ENCODE measurements at regions of chr3 and their contacts with region 1.

Region 1: DNA sequence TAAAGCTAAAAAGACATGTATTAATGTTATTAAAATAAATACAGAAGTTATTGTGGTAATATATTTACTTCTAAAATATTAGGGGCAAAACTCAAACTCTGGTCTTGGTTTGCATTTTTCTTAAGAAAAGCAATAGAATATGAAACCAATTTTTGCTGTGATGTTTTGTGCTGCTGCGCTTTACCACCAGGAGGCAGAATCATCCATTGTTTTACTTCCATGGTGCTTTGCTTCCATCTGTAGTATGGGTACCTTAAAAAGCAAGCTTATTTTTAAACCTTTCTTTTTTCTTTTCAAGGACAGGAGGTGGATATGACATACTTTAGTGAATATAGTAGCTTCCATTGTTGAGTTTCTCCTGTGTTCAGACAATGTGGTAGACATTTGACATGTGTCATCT is 46.6 kb upstream of the MRPL3 start:
- DNase-seq: no peak
- ATAC-seq: peak; percentile 20; the same call in 1 of the 3 replicates
- H3K4me3 ChIP-seq: no peak overlapping the region
- H3K27ac ChIP-seq: no peak overlapping the region
- H3K4me1 ChIP-seq: peaks cover 14% of the 10 kb centered on the region
- H3K27me3 ChIP-seq: no peaks in the 10 kb centered on the region
- CTCF ChIP-seq: peak; percentile 70 to 76 (median 73)
- EP300 ChIP-seq: no peak
- POLR2A ChIP-seq: no peak
- RAD21 ChIP-seq: peak; percentile 78

Region 2: GRCh38 chr3:131033480-131034080 is 515.8 kb before region 1 on chr3:
- CTCF ChIA-PET with region 1: interaction called, 11 read pairs
- POLR2A ChIA-PET with region 1: no interaction called
- RAD21 ChIA-PET with region 1: interaction called, 7 read pairs
- SMC1A ChIA-PET with region 1: interaction called, 4 read pairs
- in situ Hi-C with region 1: no loop called
- intact Hi-C with region 1: loop called (anchors 10 kb)
- DNase-seq: no peak
- ATAC-seq: peak; percentile 82
- H3K4me3 ChIP-seq: no peak overlapping the region
- H3K27ac ChIP-seq: no peak overlapping the region
- H3K4me1 ChIP-seq: no peaks in the 10 kb centered on the region
- H3K27me3 ChIP-seq: no peaks in the 10 kb centered on the region
- CTCF ChIP-seq: peak; percentile 48 to 67 (median 57); a peak in 5 of 6 replicates
- EP300 ChIP-seq: no peak
- POLR2A ChIP-seq: no peak
- RAD21 ChIP-seq: peak; percentile 71

Region 3: GRCh38 chr3:131561511-131561910 is 12.2 kb after region 1 on chr3:
- CTCF ChIA-PET with region 1: interaction called, 29 read pairs
- POLR2A ChIA-PET with region 1: no interaction called
- RAD21 ChIA-PET with region 1: interaction called, 3 read pairs
- SMC1A ChIA-PET with region 1: interaction called, 6 read pairs
- in situ Hi-C with region 1: no loop called
- intact Hi-C with region 1: no loop called
- DNase-seq: no peak
- ATAC-seq: no peak
- H3K4me3 ChIP-seq: no peak overlapping the region
- H3K27ac ChIP-seq: no peak overlapping the region
- H3K4me1 ChIP-seq: peaks cover 5% of the 10 kb centered on the region; the same call in 1 of the 2 replicates
- H3K27me3 ChIP-seq: no peaks in the 10 kb centered on the region
- CTCF ChIP-seq: no peak
- EP300 ChIP-seq: no peak
- POLR2A ChIP-seq: no peak
- RAD21 ChIP-seq: no peak

Region 4: DNA sequence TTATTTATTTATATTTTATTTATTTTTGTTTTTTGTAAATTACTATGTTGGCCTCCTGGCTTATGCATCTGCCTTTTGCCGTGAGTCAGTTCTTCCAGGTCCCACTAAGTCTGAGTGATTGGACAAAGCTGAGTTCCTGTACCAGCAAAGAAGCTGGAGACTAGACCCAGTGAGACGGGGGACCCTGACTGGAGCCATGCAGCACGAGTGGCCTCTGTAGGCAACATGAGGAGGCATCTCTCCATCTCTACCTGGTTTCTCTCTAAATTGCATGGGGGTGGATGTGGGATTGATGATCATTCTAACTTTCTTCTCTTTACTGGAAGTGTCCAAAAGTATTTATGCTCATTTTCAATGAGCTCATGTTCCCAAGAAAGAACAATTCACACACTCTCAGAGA is 108.8 kb after region 1 on chr3:
- CTCF ChIA-PET with region 1: interaction called, 30 read pairs
- POLR2A ChIA-PET with region 1: no interaction called
- RAD21 ChIA-PET with region 1: interaction called, 19 read pairs
- SMC1A ChIA-PET with region 1: interaction called, 18 read pairs
- in situ Hi-C with region 1: no loop called
- intact Hi-C with region 1: no loop called
- DNase-seq: no peak
- ATAC-seq: no peak
- H3K4me3 ChIP-seq: no peak overlapping the region
- H3K27ac ChIP-seq: no peak overlapping the region
- H3K4me1 ChIP-seq: no peaks in the 10 kb centered on the region
- H3K27me3 ChIP-seq: no peaks in the 10 kb centered on the region
- CTCF ChIP-seq: 0 out of 6 replicates have a peak, but pooled peaks have one; percentile 4 to 9 (median 6)
- EP300 ChIP-seq: no peak
- POLR2A ChIP-seq: no peak
- RAD21 ChIP-seq: peak; percentile 49

Region 5: DNA sequence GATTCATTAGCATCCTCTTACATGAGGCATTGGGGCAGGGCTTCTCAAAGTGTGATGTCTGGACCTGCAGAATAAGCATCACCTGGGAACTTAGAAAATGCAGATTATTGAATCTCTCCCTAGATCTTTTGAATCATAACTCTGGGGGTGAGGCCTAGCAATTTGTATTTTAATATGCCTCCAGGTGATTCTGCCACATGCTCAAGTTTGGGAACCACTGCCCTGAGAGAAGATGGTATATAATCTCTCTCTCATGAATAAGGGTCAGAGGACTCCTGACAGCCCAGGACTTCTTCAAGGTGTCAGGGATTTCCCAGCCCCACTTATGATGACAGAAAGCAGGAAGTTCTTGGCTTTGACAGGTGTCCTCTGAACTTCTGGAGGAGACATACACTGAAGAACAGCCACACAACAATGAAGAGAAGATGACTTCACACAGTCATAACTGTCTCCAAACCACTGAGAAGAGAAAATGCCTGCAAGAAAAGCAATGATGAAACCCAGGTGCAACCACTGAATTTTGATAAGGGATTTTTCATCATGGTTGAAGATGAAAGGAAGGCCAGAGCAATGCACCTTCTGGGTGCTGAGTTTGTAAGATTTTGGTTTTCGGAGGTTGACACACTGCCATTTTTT is 165.4 kb after region 1 on chr3:
- CTCF ChIA-PET with region 1: interaction called, 14 read pairs
- POLR2A ChIA-PET with region 1: interaction called, 5 read pairs
- RAD21 ChIA-PET with region 1: interaction called, 9 read pairs
- SMC1A ChIA-PET with region 1: interaction called, 10 read pairs
- in situ Hi-C with region 1: no loop called
- intact Hi-C with region 1: loop called (anchors 5 kb)
- DNase-seq: peak; percentile 71
- ATAC-seq: peak; percentile 73
- H3K4me3 ChIP-seq: no peak overlapping the region
- H3K27ac ChIP-seq: peak overlapping the region; percentile 23; the same call in 1 of the 2 replicates
- H3K4me1 ChIP-seq: peaks cover 47% of the 10 kb centered on the region
- H3K27me3 ChIP-seq: no peaks in the 10 kb centered on the region
- CTCF ChIP-seq: no peak
- EP300 ChIP-seq: peak in 1 of 2 experiments; percentile 76; a peak in 2 of 4 replicates
- POLR2A ChIP-seq: no peak
- RAD21 ChIP-seq: peak; percentile 20; the same call in 1 of the 2 replicates

Region 6: GRCh38 chr3:131794766-131795388 is 245.5 kb after region 1 on chr3:
- CTCF ChIA-PET with region 1: interaction called, 80 read pairs
- POLR2A ChIA-PET with region 1: no interaction called
- RAD21 ChIA-PET with region 1: interaction called, 54 read pairs
- SMC1A ChIA-PET with region 1: interaction called, 74 read pairs
- in situ Hi-C with region 1: no loop called
- intact Hi-C with region 1: loop called (anchors 1 kb)
- DNase-seq: no peak
- ATAC-seq: peak; percentile 80
- H3K4me3 ChIP-seq: no peak overlapping the region
- H3K27ac ChIP-seq: no peak overlapping the region
- H3K4me1 ChIP-seq: peaks cover 8% of the 10 kb centered on the region
- H3K27me3 ChIP-seq: no peaks in the 10 kb centered on the region
- CTCF ChIP-seq: peak; percentile 82 to 91 (median 83)
- EP300 ChIP-seq: no peak
- POLR2A ChIP-seq: no peak
- RAD21 ChIP-seq: peak; percentile 84

Region 7: GRCh38 chr3:132034486-132035464 is 485.4 kb after region 1 on chr3 and contains the start of gene CPNE4:
- CTCF ChIA-PET with region 1: interaction called, 88 read pairs
- POLR2A ChIA-PET with region 1: no interaction called
- RAD21 ChIA-PET with region 1: interaction called, 40 read pairs
- SMC1A ChIA-PET with region 1: interaction called, 34 read pairs
- in situ Hi-C with region 1: loop called (anchors 5 kb)
- intact Hi-C with region 1: loop called (anchors 1 kb)
- DNase-seq: no peak
- ATAC-seq: peak; percentile 98
- H3K4me3 ChIP-seq: no peak within 1 kb of the TSS
- H3K27ac ChIP-seq: no peak within 1 kb of the TSS
- H3K4me1 ChIP-seq: no peaks in the 10 kb centered on the region
- H3K27me3 ChIP-seq: peaks cover 3 to 11% of the 10 kb centered on the region in 2 experiments
- CTCF ChIP-seq: peak; percentile 72 to 73 (median 72)
- EP300 ChIP-seq: no peak
- POLR2A ChIP-seq: no peak
- RAD21 ChIP-seq: peak; percentile 32; the same call in 1 of the 2 replicates
- polyA plus RNA-seq, gene CPNE4: 0.19 to 0.75 TPM

Measured in GM12878 (cell line).